Mucosa of descending colon (tissue), 3 donors: ENCODE measurements at regions of chr12 and their contacts with region 1.

Region 1: GRCh38 chr12:49232940-49233841 is 31.7 kb upstream of the TUBA1C start:
- DNase-seq: peak; percentile 26 to 57 (median 41)
- ATAC-seq: no peak
- H3K4me3 ChIP-seq: no peak overlapping the region
- H3K4me1 ChIP-seq: no peaks in the 10 kb centered on the region
- CTCF ChIP-seq: no peak

Region 2: DNA sequence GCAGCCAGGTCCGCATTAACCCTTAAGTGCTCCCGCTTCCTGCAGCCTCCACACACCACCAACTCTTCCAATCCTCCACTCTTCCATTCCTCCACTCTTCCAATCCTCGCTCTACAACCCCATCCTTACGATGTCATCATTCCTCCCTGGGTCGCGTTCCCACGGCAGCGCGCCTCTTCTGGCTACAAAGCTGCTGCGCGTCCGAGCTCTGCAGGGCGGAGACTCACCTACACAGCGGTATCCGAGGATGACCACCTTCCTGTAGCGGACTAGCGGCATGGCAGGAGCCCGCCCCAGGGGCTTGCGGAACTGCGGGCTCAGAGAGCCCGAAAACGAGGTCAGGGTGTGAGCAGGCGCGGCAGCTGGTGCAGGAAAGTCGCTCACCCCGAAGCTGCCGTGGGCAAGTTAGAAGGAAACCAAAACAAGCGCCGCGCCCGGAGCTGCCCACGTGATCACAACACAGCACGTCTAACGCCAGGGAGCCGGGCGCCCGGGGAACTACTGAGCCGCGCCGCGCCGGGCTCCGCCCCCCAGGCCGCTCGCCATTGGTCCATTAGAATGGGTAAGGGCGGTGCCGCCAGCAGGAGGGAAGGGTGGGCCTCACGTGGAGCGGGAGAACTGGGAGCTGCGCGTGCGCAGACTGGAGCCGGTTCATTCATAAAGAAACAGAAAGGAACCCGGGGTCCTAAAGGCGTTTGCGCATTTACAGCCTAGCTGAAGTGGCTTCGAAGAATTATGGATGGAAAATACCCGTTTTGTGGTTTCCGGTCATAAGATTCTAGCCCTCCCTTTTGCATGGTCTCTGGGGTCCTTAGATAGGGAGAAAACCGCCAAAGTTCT is 163.5 kb before region 1 on chr12 and contains the start of gene RHEBL1:
- intact Hi-C with region 1: loop called in 1 of 2 experiments (anchors 10 kb)
- DNase-seq: peak; percentile 99
- ATAC-seq: peak; percentile 100
- H3K4me3 ChIP-seq: peak within 1 kb of the TSS; percentile 39
- H3K4me1 ChIP-seq: peaks cover 7% of the 10 kb centered on the region
- CTCF ChIP-seq: no peak
- total RNA-seq, gene RHEBL1: 0.23 to 0.58 (median 0.38) TPM

Region 3: DNA sequence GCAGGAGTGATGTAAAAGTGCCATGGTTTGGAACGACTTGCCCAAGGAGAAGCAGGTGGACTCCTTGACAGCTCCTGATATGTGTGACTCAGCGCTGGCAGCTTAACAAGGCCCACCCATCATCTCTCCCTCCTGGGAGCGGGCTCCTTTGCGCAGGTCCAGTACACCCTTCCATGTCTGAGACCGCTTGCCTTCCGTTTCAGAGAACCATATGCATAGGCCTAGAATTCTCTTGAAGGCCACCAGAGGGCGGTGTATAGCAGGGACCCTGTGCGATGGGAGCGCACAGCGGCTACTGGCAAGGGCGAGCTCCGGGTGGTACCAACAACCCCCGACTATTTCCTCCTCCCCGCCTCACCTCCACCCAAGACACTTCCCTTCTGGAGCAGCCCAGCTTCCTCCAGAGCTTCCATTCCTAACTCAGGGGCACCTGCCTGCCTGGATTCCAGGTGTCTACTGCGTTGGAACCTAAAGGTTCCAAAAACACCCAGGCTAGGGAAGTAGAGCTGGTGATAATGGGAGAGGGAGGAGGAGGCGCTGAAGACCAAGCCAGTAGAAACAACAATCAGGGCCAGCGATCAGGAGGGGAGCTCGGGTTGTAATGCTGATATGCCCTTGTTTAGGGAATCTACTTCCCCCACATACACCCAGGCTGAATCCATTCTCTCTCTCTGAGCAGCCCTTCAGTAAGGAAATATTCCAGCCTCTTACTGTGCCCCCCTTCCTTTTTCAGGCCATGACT is 144.8 kb before region 1 on chr12:
- intact Hi-C with region 1: loop called in 1 of 2 experiments (anchors 10 kb)
- DNase-seq: peak; percentile 61 to 66 (median 62)
- ATAC-seq: peak; percentile 94
- H3K4me3 ChIP-seq: no peak overlapping the region
- H3K4me1 ChIP-seq: peaks cover 26% of the 10 kb centered on the region
- CTCF ChIP-seq: peak; percentile 76

Region 4: DNA sequence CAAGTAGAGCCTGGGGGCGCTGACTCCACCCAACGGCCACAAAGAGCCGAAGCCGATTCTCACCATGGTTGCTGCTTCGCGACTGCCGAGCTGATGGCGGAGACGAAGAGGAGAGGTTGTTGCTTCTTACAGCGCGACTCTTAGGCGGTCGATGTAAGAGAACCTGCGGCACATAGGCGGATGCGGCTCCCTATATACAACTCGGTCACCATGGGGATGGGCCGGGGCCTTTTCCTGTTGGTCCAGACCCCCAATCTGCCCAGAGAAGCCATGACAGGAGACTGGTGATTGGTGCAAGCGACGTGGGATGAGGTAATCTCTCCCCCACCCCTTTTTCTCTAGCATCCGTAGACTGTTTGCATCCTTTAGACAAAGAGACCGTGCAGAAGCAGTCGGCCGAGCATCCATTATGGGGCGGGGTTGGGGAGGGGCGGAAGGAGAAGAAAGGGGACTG is 44.2 kb before region 1 on chr12 and contains the start of gene TUBA1A:
- intact Hi-C with region 1: loop called in 1 of 2 experiments (anchors 5 kb)
- DNase-seq: peak; percentile 78 to 95 (median 85)
- ATAC-seq: peak; percentile 92
- H3K4me3 ChIP-seq: peak within 1 kb of the TSS; percentile 51
- H3K4me1 ChIP-seq: peaks cover 4% of the 10 kb centered on the region
- CTCF ChIP-seq: no peak
- total RNA-seq, gene TUBA1A: 20.5 to 295 (median 64.4) TPM